Colonic mucosa (tissue), 4 donors: ENCODE measurements at regions of chr18 and their contacts with region 1.

Region 1: GRCh38 chr18:63451799-63452660 is 24.7 kb upstream of the SERPINB5 start:
- DNase-seq: peak; percentile 79
- H3K4me3 ChIP-seq: no peak overlapping the region
- H3K27ac ChIP-seq: peak overlapping the region; percentile 71
- H3K4me1 ChIP-seq: peaks cover 21% of the 10 kb centered on the region
- H3K27me3 ChIP-seq: no peaks in the 10 kb centered on the region
- CTCF ChIP-seq: no peak

Region 2: GRCh38 chr18:63505566-63506335 is 53.7 kb after region 1 on chr18:
- intact Hi-C with region 1: loop called (anchors 10 kb)
- DNase-seq: peak; percentile 54
- H3K4me3 ChIP-seq: no peak overlapping the region
- H3K27ac ChIP-seq: no peak overlapping the region
- H3K4me1 ChIP-seq: no peaks in the 10 kb centered on the region
- H3K27me3 ChIP-seq: no peaks in the 10 kb centered on the region
- CTCF ChIP-seq: peak; percentile 54